Posterior vena cava (tissue), 2 donors: ENCODE measurements at regions of chr16 and their contacts with region 1.

Region 1: GRCh38 chr16:23682181-23682580 is 3.5 kb downstream of the PLK1 start:
- DNase-seq: no peak

Region 2: GRCh38 chr16:23640931-23641765 is 41.0 kb before region 1 on chr16 and contains the starts of genes DCTN5 and PALB2:
- intact Hi-C with region 1: no loop called
- DNase-seq: peak; percentile 98
- total RNA-seq, gene DCTN5: 46.7 to 48.2 TPM
- total RNA-seq, gene PALB2: 7.7 to 10.2 TPM

Region 3: GRCh38 chr16:23712976-23713375 is 30.8 kb after region 1 on chr16 and contains the start of gene ERN2:
- intact Hi-C with region 1: no loop called
- DNase-seq: no peak
- total RNA-seq, gene ERN2: not detected

Region 4: DNA sequence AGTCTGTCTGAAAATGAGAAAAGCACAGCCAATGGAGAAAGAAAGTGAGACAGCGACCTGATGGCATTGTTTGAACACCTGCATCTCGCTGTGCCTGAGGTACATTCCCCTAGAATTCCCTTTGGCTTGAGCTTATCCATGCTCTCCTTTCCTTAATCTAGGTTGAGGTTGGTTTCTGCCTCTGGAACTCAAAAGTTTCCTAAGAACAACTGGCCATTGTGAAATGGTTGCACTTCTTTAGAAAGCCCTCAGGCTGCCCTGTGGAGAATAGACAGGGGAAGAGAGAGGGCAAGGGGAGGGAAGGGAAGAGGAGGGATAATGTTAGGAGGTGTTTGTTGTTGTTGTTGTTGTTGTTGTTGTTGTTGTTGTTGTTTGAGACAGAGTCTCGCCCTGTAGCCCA is 62.4 kb after region 1 on chr16:
- intact Hi-C with region 1: no loop called
- DNase-seq: no peak

Region 5: DNA sequence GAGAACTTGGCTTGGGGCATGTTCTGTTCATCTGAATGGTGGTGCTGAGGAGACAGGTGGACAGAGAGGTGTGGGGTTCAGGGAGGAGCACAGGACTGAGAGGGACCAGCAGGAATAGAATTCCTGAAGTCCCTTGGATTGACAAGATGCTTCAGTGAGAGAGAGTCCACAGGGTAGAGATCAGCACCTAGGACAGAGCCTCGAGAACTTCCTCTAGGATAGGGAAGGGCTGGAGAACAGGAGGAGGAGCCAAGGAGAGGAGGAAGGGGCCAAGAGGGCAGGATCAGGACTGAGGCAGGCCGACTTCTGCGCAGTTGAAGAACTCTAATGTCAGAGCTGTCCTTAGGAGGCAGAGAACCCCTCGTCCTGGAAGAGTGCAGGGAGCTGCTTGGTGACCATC is 292.0 kb after region 1 on chr16:
- intact Hi-C with region 1: no loop called
- DNase-seq: no peak

Region 6: GRCh38 chr16:24022797-24023196 is 340.6 kb after region 1 on chr16:
- intact Hi-C with region 1: loop called in 1 of 2 experiments (anchors 5 kb)
- DNase-seq: no peak